ENCODE measurements at regions of chr2 and their contacts with region 1.

Region 1: GRCh38 chr2:86221066-86221684 is 21.9 kb downstream of the MRPL35 start:
- DNase-seq: peak; percentile 32 to 66 (median 46)
- ATAC-seq: peak; percentile 74
- H3K4me3 ChIP-seq: no peak overlapping the region
- H3K4me3 Mint-ChIP-seq: no peak overlapping the region
- H3K27ac ChIP-seq: no peak overlapping the region
- H3K27ac Mint-ChIP-seq: peak overlapping the region in 3 of 9 donors; percentile 24 to 79 (median 62)
- H3K4me1 ChIP-seq: peaks cover 0 to 4% of the 10 kb centered on the region in 2 donors
- H3K4me1 Mint-ChIP-seq: peaks cover 15 to 40% (median 29%) of the 10 kb centered on the region in 7 donors
- H3K27me3 ChIP-seq: no peaks in the 10 kb centered on the region
- H3K27me3 Mint-ChIP-seq: no peaks in the 10 kb centered on the region

Region 2: DNA sequence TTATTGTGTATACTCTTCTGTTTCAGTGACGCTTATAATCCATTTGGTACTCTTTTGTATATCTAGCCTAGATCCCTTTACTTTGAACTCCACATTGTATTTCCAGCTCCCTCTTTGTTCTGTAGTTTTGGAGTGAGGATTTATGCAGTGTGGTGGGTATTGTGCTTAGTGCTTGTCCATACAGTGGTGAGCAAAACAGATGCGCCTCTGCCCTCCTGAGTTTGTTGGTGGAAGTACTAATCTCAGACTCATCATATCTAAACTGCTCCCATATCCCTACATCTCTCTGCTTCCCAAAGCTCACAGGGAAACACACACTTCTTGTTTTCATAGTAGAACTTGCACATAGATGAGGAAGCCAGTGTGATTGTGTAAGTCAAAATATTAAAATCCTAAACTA is 103.0 kb before region 1 on chr2:
- CTCF ChIA-PET with region 1: no interaction called
- POLR2A ChIA-PET with region 1: no interaction called
- intact Hi-C with region 1: no loop called
- DNase-seq: no peak
- ATAC-seq: no peak
- H3K4me3 ChIP-seq: no peak overlapping the region
- H3K4me3 Mint-ChIP-seq: no peak overlapping the region
- H3K27ac ChIP-seq: no peak overlapping the region
- H3K27ac Mint-ChIP-seq: no peak overlapping the region
- H3K4me1 ChIP-seq: no peaks in the 10 kb centered on the region
- H3K4me1 Mint-ChIP-seq: peaks cover 5 to 19% (median 9%) of the 10 kb centered on the region in 7 donors
- H3K27me3 ChIP-seq: no peaks in the 10 kb centered on the region
- H3K27me3 Mint-ChIP-seq: no peaks in the 10 kb centered on the region

Region 3: GRCh38 chr2:86195055-86195807 is 25.9 kb before region 1 on chr2 and contains the start of gene IMMT:
- CTCF ChIA-PET with region 1: no interaction called
- POLR2A ChIA-PET with region 1: interaction called, 8 read pairs
- intact Hi-C with region 1: loop called in 1 of 2 experiments (anchors 2 kb)
- DNase-seq: peak; percentile 86 to 96 (median 94)
- ATAC-seq: peak; percentile 94
- H3K4me3 ChIP-seq: peak within 1 kb of the TSS; percentile 74
- H3K4me3 Mint-ChIP-seq: peak within 1 kb of the TSS; percentile 86 to 99 (median 95)
- H3K27ac ChIP-seq: peak within 1 kb of the TSS; percentile 97
- H3K27ac Mint-ChIP-seq: peak within 1 kb of the TSS; percentile 82 to 97 (median 90)
- H3K4me1 ChIP-seq: peaks cover 15 to 23% of the 10 kb centered on the region in 2 donors
- H3K4me1 Mint-ChIP-seq: peaks cover 35 to 74% (median 60%) of the 10 kb centered on the region in 7 donors
- H3K27me3 ChIP-seq: no peaks in the 10 kb centered on the region
- H3K27me3 Mint-ChIP-seq: no peaks in the 10 kb centered on the region
- total RNA-seq, gene IMMT: 59.2 to 164 (median 77.0) TPM

Region 4: DNA sequence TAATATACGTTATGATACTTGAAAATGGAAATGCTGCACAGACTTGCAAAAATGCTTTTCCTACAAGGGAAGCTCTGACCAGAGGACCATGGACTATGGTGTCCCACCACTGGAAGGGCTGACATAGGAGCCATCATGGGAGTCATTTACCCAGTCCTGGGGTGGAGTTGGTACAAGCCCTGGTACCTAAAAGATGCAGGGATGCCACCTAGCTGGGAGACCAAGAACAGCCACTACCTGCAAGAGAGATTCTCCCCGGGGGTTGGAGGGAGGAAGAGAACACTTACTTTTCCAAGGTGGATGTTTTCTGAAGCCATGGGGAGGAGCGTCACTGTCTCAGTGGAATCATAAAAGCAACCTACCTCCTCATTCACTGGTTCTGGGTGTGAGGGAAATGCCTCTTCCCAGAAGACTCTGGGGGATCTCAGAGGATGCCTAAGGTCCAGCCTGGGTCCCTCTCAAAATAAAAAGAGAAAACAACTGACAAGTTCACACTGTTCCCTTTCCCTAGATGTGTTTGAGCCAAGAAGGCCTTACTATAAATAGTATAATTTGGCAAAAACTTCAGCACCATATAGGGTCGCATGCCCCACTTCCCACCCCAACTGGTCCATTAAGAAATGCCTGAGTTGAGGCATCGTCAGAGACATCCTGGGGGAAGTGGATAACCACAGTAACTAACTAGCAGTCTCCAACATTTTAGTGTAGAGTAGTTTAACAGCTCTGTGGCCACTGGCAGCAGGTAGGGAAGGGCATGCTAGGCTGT is 76.4 kb after region 1 on chr2:
- CTCF ChIA-PET with region 1: no interaction called
- POLR2A ChIA-PET with region 1: no interaction called
- intact Hi-C with region 1: loop called in 1 of 2 experiments (anchors 1 kb)
- DNase-seq: peak in 2 of 9 donors; percentile 2 to 9
- ATAC-seq: no peak
- H3K4me3 ChIP-seq: no peak overlapping the region
- H3K4me3 Mint-ChIP-seq: no peak overlapping the region
- H3K27ac ChIP-seq: no peak overlapping the region
- H3K27ac Mint-ChIP-seq: no peak overlapping the region
- H3K4me1 ChIP-seq: no peaks in the 10 kb centered on the region
- H3K4me1 Mint-ChIP-seq: no peaks in the 10 kb centered on the region
- H3K27me3 ChIP-seq: peaks cover 0 to 3% of the 10 kb centered on the region in 2 donors
- H3K27me3 Mint-ChIP-seq: peaks cover 3 to 32% (median 9%) of the 10 kb centered on the region in 5 donors

Region 5: DNA sequence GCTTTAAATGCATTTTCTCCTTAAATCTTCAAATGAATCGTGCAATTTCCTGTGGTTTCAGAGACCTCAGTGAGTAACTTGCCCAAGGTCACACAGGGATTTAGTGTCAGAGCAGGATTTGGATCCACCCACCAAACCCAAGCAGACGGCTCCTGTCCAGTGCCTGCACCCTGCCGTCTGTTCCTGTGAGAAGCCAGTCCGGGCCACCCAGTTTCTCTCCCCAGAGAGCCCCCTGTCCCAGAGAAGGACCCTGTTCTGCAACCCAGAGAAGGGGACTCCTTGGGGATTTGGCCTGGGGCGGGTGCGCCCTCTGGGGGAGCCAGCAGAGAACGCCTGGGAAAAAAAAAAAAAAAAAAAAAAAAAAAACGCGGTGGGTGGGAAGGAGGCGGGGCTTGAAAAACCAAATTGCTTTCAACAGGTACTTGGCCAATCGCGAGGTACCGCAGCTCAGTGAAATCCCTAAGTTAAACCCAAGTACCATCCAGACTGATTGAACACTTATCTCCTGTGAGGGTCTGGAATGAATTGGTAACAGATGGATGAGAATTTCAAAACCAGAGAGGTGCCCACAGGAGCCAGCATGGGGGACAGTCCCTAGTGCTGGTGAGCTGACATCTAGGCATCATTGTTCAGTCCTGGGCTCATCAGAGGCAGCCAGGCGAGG is 147.1 kb after region 1 on chr2:
- CTCF ChIA-PET with region 1: interaction called, 50 read pairs
- POLR2A ChIA-PET with region 1: interaction called, 6 read pairs
- intact Hi-C with region 1: loop called (anchors 1 kb)
- DNase-seq: peak; percentile 12 to 51 (median 43)
- ATAC-seq: peak; percentile 75
- H3K4me3 ChIP-seq: peak overlapping the region; percentile 50
- H3K4me3 Mint-ChIP-seq: peak overlapping the region; percentile 43 to 84 (median 70)
- H3K27ac ChIP-seq: no peak overlapping the region
- H3K27ac Mint-ChIP-seq: peak overlapping the region in 8 of 9 donors; percentile 60 to 94 (median 82)
- H3K4me1 ChIP-seq: peaks cover 6 to 51% of the 10 kb centered on the region in 2 donors
- H3K4me1 Mint-ChIP-seq: peaks cover 24 to 77% (median 63%) of the 10 kb centered on the region in 7 donors
- H3K27me3 ChIP-seq: no peaks in the 10 kb centered on the region
- H3K27me3 Mint-ChIP-seq: no peaks in the 10 kb centered on the region

Region 6: DNA sequence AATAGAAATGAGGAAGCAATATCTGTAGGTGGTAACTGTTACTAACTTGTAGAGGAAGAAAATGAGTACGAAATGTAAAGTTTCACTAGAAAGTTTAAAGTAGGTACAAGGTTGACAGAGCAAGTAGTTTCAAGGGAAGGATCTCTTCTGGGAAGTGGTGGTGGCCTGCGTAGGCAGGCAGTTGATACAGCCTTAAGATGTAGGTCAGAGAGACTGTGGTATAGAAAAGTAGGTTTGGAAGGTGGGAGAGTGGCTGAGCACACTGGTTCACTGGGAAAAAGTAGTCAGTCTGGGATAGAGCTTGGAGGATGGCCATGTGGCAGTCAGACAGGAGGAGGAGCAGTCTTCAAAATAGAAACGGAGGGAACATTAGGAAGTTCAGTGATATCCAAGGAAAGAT is 243.5 kb after region 1 on chr2:
- CTCF ChIA-PET with region 1: interaction called, 9 read pairs
- POLR2A ChIA-PET with region 1: no interaction called
- intact Hi-C with region 1: loop called in 1 of 2 experiments (anchors 2 kb)
- DNase-seq: no peak
- ATAC-seq: no peak
- H3K4me3 ChIP-seq: no peak overlapping the region
- H3K4me3 Mint-ChIP-seq: peak overlapping the region in 5 of 10 donors; percentile 3 to 60 (median 21)
- H3K27ac ChIP-seq: no peak overlapping the region
- H3K27ac Mint-ChIP-seq: peak overlapping the region; percentile 28 to 81 (median 73)
- H3K4me1 ChIP-seq: peaks cover 0 to 15% of the 10 kb centered on the region in 2 donors
- H3K4me1 Mint-ChIP-seq: peaks cover 29 to 79% (median 65%) of the 10 kb centered on the region in 7 donors
- H3K27me3 ChIP-seq: no peaks in the 10 kb centered on the region
- H3K27me3 Mint-ChIP-seq: no peaks in the 10 kb centered on the region

Region 7: DNA sequence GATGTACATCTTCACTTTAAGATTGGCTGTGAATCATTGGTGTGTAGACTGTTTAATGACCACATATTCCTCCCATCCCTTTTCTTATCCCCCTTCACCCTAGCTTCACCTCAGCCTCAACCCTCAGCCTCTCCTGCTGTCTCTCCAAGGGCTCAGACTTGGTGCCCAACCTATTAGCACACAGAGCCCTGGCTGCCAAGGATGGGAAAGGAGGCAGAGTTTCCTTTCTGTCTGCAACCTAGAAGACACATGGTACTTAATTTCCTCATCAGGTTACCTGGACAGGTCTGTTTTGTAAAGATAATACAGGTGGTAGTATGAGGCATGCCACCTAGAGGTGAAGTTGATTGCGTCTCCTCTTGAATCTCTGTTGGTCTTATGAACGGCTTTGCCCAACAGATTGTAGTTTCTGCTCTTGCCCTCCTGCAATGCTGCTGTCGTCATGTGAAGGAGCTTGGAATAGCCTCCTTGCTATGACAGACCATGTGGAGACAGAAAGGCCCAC is 454.4 kb after region 1 on chr2:
- CTCF ChIA-PET with region 1: no interaction called
- POLR2A ChIA-PET with region 1: no interaction called
- intact Hi-C with region 1: loop called in 1 of 2 experiments (anchors 1 kb)
- DNase-seq: peak in 2 of 9 donors; percentile 11 to 13
- ATAC-seq: no peak
- H3K4me3 ChIP-seq: no peak overlapping the region
- H3K4me3 Mint-ChIP-seq: no peak overlapping the region
- H3K27ac ChIP-seq: no peak overlapping the region
- H3K27ac Mint-ChIP-seq: peak overlapping the region in 1 of 9 donors; percentile 3
- H3K4me1 ChIP-seq: no peaks in the 10 kb centered on the region
- H3K4me1 Mint-ChIP-seq: peaks cover 0 to 1% (median 0%) of the 10 kb centered on the region in 7 donors
- H3K27me3 ChIP-seq: no peaks in the 10 kb centered on the region
- H3K27me3 Mint-ChIP-seq: peaks cover 0 to 3% (median 0%) of the 10 kb centered on the region in 5 donors

Measured in naive thymus-derived CD4-positive, alpha-beta T cell (primary cell).